Tibial artery (tissue), 4 donors: ENCODE measurements at regions of chr1 and their contacts with region 1.

Region 1: GRCh38 chr1:212782422-212783154 is 9.0 kb downstream of the NSL1 start:
- DNase-seq: no peak
- H3K4me3 ChIP-seq: no peak overlapping the region
- H3K27ac ChIP-seq: no peak overlapping the region
- H3K4me1 ChIP-seq: no peaks in the 10 kb centered on the region
- H3K27me3 ChIP-seq: no peaks in the 10 kb centered on the region
- CTCF ChIP-seq: peak; percentile 43 to 68

Region 2: GRCh38 chr1:212665241-212666115 is 117.1 kb before region 1 on chr1:
- intact Hi-C with region 1: loop called (anchors 10 kb)
- DNase-seq: peak; percentile 81 to 89
- H3K4me3 ChIP-seq: peak overlapping the region; percentile 54 to 60
- H3K27ac ChIP-seq: peak overlapping the region; percentile 49 to 57
- H3K4me1 ChIP-seq: peaks cover 0 to 25% (median 7%) of the 10 kb centered on the region in 4 donors
- H3K27me3 ChIP-seq: no peaks in the 10 kb centered on the region
- CTCF ChIP-seq: peak; percentile 93 to 96

Region 3: DNA sequence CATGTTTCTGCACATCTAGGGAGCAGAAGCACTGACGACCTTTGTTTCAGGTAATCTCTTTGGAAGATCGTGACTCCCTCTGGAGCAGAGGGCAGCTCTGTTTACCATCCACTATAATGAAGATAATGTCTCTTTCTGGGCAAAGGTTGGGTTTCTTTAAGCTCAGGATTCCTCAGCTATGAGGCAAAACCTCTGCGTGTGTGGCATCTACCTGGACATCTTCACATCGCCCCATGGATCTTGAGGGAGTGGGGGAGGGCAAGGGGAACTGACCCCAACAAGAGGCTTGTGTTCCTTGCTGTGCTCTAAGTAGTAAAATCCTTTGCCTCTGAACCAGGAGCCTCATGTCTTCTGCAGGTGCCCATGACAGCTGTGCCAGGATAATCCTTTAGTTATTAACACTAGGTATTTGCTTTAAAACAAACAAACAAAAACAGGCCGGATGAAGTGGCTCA is 45.3 kb after region 1 on chr1:
- intact Hi-C with region 1: no loop called
- DNase-seq: no peak
- H3K4me3 ChIP-seq: no peak overlapping the region
- H3K27ac ChIP-seq: no peak overlapping the region
- H3K4me1 ChIP-seq: no peaks in the 10 kb centered on the region
- H3K27me3 ChIP-seq: no peaks in the 10 kb centered on the region
- CTCF ChIP-seq: no peak